ENCODE measurements at regions of chr12 and their contacts with region 1.

Region 1: DNA sequence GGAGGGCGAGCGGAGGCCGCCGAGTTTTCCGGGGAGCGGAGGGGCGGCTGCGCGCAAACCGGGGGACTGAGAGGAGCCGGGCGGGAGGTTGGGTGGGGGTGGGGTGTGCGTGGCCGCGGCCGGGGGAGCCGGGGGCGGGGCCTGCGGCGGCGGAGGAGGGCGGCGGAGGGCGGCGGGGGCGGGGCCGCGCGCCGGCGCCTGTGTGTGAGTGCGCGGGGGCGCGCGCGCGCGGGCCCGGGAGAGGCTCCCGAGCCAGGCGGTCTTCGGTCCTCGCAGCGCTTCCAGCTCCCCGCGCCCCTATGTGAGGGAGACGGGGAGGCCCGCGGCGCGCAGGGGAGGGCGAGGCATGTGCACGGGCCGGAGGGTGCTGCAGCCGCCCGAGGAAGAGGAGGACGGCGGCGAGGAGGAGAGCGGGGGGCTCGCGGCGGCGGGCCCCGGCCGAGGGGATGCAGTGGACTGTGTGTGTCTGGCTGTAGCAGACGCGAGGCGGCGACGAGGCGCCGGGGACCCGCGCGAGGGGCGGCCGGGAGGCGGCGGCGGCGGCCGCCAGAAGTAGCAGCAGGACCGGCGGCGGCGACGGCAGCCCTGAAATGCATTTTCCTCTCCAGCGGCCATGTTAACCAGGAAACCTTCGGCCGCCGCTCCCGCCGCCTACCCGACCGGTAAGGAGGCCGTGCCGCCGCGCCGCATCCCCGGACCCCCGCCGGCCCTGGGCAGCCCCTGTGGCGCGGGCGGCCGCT is at the start of gene DYRK2:
- DNase-seq: peak; percentile 65
- H3K4me3 Mint-ChIP-seq: peak within 1 kb of the TSS; percentile 98
- H3K27ac Mint-ChIP-seq: peak within 1 kb of the TSS; percentile 81
- H3K4me1 Mint-ChIP-seq: peaks cover 41% of the 10 kb centered on the region
- H3K27me3 Mint-ChIP-seq: no peaks in the 10 kb centered on the region
- total RNA-seq, gene DYRK2: 29.3 to 30.0 TPM

Region 2: GRCh38 chr12:66915306-66915904 is 733.3 kb before region 1 on chr12:
- CTCF ChIA-PET with region 1: no interaction called
- intact Hi-C with region 1: no loop called
- DNase-seq: no peak
- H3K4me3 Mint-ChIP-seq: no peak overlapping the region
- H3K27ac Mint-ChIP-seq: no peak overlapping the region
- H3K4me1 Mint-ChIP-seq: peaks cover 24% of the 10 kb centered on the region
- H3K27me3 Mint-ChIP-seq: no peaks in the 10 kb centered on the region

Region 3: DNA sequence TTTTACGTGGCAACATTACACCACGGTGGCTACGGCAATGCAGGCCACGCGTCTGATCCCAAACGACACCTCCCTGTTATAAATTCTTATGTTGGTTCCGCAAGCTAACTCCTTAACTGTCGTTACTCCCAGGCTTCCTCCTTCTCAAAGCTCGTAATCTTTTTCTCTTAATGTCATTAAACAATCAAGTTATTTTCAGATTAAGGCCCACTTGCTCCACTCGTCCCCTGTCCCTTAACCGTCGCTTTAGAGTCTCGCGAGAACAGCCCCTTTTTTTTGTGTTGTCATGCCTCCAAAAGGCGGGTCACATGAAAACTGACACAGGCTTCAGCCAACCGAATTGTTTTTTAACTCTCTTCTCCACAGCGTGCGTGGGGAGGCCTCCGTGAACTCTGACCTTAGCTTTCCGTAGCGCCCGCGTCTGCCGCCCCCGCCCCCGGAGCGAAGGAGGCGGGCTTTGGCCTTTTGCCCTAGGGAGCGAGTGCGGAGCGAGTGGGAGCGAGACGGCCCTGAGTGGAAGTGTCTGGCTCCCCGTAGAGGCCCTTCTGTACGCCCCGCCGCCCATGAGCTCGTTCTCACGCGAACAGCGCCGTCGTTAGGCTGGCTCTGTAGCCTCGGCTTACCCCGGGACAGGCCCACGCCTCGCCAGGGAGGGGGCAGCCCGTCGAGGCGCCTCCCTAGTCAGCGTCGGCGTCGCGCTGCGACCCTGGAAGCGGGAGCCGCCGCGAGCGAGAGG is 379.6 kb before region 1 on chr12 and contains the start of gene CAND1:
- CTCF ChIA-PET with region 1: no interaction called
- intact Hi-C with region 1: loop called (anchors 2 kb)
- DNase-seq: peak; percentile 97
- H3K4me3 Mint-ChIP-seq: peak within 1 kb of the TSS; percentile 89
- H3K27ac Mint-ChIP-seq: peak within 1 kb of the TSS; percentile 100
- H3K4me1 Mint-ChIP-seq: peaks cover 33% of the 10 kb centered on the region
- H3K27me3 Mint-ChIP-seq: no peaks in the 10 kb centered on the region
- total RNA-seq, gene CAND1: 221 to 224 TPM

Region 4: GRCh38 chr12:67377522-67377921 is 271.2 kb before region 1 on chr12:
- CTCF ChIA-PET with region 1: no interaction called
- intact Hi-C with region 1: no loop called
- DNase-seq: no peak
- H3K4me3 Mint-ChIP-seq: no peak overlapping the region
- H3K27ac Mint-ChIP-seq: no peak overlapping the region
- H3K4me1 Mint-ChIP-seq: peaks cover 2% of the 10 kb centered on the region
- H3K27me3 Mint-ChIP-seq: no peaks in the 10 kb centered on the region

Region 5: DNA sequence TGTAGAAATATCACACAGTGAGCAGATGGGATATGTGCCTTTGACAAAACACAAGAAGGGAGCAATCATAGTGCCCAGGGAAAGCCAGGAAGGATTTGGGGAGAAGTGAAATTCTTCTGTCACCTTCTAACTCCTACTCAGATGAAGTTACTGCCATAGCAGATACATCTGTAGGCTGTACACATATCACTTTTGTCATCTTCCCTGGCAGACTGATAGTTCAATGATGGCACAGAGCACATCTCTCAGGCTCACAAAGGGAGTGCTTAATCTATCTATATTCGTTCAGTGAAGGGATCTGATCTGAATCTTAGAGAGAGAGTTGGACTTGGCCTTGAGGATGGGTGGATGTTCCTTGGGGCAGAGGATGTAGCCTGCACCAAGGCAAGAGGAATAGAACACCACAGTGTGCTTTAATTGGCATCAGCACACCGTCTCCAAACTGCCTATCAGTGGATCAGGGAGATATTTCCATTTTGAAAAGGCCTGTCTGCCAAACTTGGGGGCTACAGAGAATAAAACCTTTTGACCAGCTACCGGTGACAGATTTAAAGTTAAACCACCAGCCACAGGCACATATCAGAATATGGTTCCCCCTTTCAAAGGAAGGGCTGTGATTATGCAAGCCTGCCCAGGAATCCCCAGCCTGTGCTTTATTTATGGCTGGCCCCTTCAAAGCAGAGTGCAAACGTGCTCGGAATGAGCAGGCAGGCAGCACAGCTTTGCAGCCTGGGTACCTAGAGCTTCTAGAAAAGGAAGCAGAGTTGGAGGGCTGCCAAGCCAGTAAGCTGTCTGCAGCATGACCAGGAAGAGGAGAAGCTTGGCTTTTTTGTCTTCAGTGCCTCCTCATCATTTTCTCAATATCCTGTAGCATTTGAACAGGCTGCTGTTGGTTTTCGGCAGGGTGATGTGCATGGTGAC is 165.7 kb before region 1 on chr12:
- CTCF ChIA-PET with region 1: no interaction called
- intact Hi-C with region 1: loop called (anchors 1 kb)
- DNase-seq: peak; percentile 95
- H3K4me3 Mint-ChIP-seq: no peak overlapping the region
- H3K27ac Mint-ChIP-seq: no peak overlapping the region
- H3K4me1 Mint-ChIP-seq: peaks cover 40% of the 10 kb centered on the region
- H3K27me3 Mint-ChIP-seq: no peaks in the 10 kb centered on the region

Region 6: GRCh38 chr12:67630373-67631088 is 18.2 kb before region 1 on chr12:
- CTCF ChIA-PET with region 1: interaction called, 5 read pairs
- intact Hi-C with region 1: loop called (anchors 1 kb)
- DNase-seq: peak; percentile 93
- H3K4me3 Mint-ChIP-seq: peak overlapping the region; percentile 33
- H3K27ac Mint-ChIP-seq: peak overlapping the region; percentile 79
- H3K4me1 Mint-ChIP-seq: peaks cover 81% of the 10 kb centered on the region
- H3K27me3 Mint-ChIP-seq: no peaks in the 10 kb centered on the region

Region 7: DNA sequence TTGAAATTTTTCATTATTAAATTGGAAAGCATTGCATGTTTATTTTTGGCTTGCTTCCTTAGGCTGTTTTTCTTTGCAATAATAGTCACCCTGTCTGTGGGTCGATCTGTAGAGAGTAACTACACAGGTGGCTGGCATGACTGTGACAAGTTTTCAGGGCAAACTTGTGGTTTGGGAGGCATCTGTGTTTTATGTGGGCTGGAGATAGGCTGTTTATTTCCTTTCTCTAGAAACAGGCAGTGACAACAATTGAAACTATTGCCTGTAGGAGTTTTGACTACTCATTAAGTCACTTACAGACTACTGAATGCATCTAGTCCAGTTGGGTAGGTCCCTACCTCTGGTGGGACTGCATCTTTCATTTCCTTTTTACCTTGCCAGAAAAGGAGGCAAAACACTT is 155.5 kb after region 1 on chr12:
- CTCF ChIA-PET with region 1: no interaction called
- intact Hi-C with region 1: loop called (anchors 2 kb)
- DNase-seq: peak; percentile 73
- H3K4me3 Mint-ChIP-seq: no peak overlapping the region
- H3K27ac Mint-ChIP-seq: no peak overlapping the region
- H3K4me1 Mint-ChIP-seq: peaks cover 14% of the 10 kb centered on the region
- H3K27me3 Mint-ChIP-seq: no peaks in the 10 kb centered on the region

Region 8: DNA sequence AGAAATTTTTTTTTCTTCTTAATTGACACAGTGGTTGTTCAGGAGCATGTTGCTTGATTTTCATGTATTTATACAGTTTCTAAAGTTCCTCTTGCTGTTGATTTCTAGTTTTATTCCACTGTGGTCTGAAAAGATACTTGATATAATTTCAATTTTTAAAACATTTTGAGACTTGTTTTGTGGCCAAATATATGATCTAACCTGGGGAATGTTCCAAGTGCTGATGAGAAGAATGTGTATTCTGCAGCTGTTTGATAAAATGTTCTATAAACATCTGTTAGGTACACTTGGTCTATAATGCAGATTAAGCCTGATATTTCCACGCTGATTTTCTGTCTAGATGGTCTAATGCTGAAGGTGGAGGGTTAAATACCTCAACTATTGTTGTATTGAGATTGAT is 189.2 kb after region 1 on chr12:
- CTCF ChIA-PET with region 1: no interaction called
- intact Hi-C with region 1: no loop called
- DNase-seq: no peak
- H3K4me3 Mint-ChIP-seq: no peak overlapping the region
- H3K27ac Mint-ChIP-seq: no peak overlapping the region
- H3K4me1 Mint-ChIP-seq: no peaks in the 10 kb centered on the region
- H3K27me3 Mint-ChIP-seq: no peaks in the 10 kb centered on the region

Region 9: GRCh38 chr12:68040450-68041075 is 391.9 kb after region 1 on chr12:
- CTCF ChIA-PET with region 1: no interaction called
- intact Hi-C with region 1: loop called (anchors 5 kb)
- DNase-seq: peak; percentile 83
- H3K4me3 Mint-ChIP-seq: no peak overlapping the region
- H3K27ac Mint-ChIP-seq: peak overlapping the region; percentile 29
- H3K4me1 Mint-ChIP-seq: peaks cover 42% of the 10 kb centered on the region
- H3K27me3 Mint-ChIP-seq: no peaks in the 10 kb centered on the region

Measured in activated naive CD4-positive, alpha-beta T cell treated with anti-CD3 and anti-CD28 coated beads for 36 hours (primary cell).